ENCODE measurements at regions of chr2 and their contacts with region 1.

Region 1: GRCh38 chr2:20097879-20098714 is 46.7 kb upstream of the LAPTM4A start:
- DNase-seq: peak; percentile 74 to 84
- ATAC-seq: peak; percentile 89

Region 2: GRCh38 chr2:19738707-19739106 is 359.4 kb before region 1 on chr2:
- intact Hi-C with region 1: no loop called
- DNase-seq: peak in 1 of 2 donors; percentile 36
- ATAC-seq: no peak

Region 3: DNA sequence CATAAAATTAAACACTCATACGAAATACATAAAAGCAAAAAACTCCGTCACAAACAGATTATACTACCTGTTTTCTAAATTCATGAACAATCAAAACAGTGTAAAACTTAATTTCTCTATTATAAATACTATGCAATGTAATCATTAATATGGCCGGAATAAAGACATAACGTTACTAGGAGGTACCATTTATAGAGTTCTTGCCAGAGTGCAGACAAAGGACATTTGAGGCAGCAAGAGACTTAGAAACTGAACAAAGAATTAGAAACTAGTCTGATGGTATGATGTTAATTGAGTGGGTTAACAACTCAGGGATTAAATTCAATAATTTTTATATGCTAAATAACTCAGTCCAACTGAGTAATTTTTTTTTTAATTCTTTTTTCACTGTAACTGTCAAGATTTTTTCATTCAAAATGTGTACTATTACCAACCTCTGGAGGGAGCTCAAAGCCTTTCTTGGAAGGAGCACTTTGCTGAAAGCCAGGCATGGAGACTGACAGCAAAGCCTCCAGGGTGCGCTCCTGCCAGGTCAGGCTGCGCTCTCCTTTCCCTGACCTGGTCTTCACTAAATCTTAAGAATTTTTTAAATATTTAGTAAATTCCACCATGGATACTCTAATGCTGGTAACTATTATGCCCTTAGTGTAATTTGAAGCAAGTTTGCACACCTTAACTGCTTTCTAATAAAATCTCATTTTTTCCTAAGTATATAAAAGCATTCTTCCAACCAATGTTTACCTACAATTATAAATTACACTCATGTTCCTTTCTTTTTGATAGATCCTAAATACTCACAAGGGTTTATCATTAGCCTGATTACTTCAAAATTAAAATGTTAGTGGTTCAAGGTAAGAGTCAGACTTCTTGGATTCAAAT is 142.3 kb before region 1 on chr2:
- intact Hi-C with region 1: loop called in 1 of 2 experiments (anchors 5 kb)
- DNase-seq: peak; percentile 40 to 55
- ATAC-seq: peak; percentile 98

Region 4: GRCh38 chr2:20015472-20016083 is 82.5 kb before region 1 on chr2:
- intact Hi-C with region 1: loop called (anchors 5 to 10 kb)
- DNase-seq: no peak
- ATAC-seq: peak; percentile 64

Region 5: GRCh38 chr2:20282916-20283592 is 185.0 kb after region 1 on chr2:
- intact Hi-C with region 1: no loop called
- DNase-seq: peak in 1 of 2 donors; percentile 40
- ATAC-seq: peak; percentile 25